ENCODE measurements at regions of chr4 and their contacts with region 1.

Region 1: GRCh38 chr4:64465263-64465662 is 56.0 kb upstream of the TECRL start:
- DNase-seq: no peak
- H3K27ac ChIP-seq: no peak overlapping the region
- CTCF ChIP-seq: no peak

Region 2: GRCh38 chr4:64174247-64174882 is 290.9 kb before region 1 on chr4:
- CTCF ChIA-PET with region 1: no interaction called
- POLR2A ChIA-PET with region 1: interaction called, 10 read pairs
- DNase-seq: no peak
- H3K27ac ChIP-seq: no peak overlapping the region
- CTCF ChIP-seq: no peak

Measured in RWPE1 (cell line).